Naive thymus-derived CD4-positive, alpha-beta T cell (primary cell): ENCODE measurements at regions of chr1 and their contacts with region 1.

Region 1: GRCh38 chr1:100895540-100896483 is at the start of gene SLC30A7:
- DNase-seq: peak; percentile 93 to 99 (median 94)
- ATAC-seq: peak; percentile 90
- H3K4me3 ChIP-seq: peak within 1 kb of the TSS; percentile 96
- H3K4me3 Mint-ChIP-seq: peak within 1 kb of the TSS; percentile 91 to 100 (median 99)
- H3K27ac ChIP-seq: peak within 1 kb of the TSS; percentile 95
- H3K27ac Mint-ChIP-seq: peak within 1 kb of the TSS; percentile 95 to 100 (median 99)
- H3K4me1 ChIP-seq: peaks cover 7 to 10% of the 10 kb centered on the region in 2 donors
- H3K4me1 Mint-ChIP-seq: peaks cover 17 to 58% (median 50%) of the 10 kb centered on the region in 7 donors
- H3K27me3 ChIP-seq: no peaks in the 10 kb centered on the region
- H3K27me3 Mint-ChIP-seq: no peaks in the 10 kb centered on the region
- total RNA-seq, gene SLC30A7: 29.9 to 44.5 (median 38.8) TPM

Region 2: GRCh38 chr1:99849744-99850458 is 1045.9 kb before region 1 on chr1 and contains the start of gene AGL:
- CTCF ChIA-PET with region 1: no interaction called
- POLR2A ChIA-PET with region 1: no interaction called
- intact Hi-C with region 1: loop called in 1 of 2 experiments (anchors 1 kb)
- DNase-seq: peak; percentile 76 to 88 (median 86)
- ATAC-seq: peak; percentile 97
- H3K4me3 ChIP-seq: peak within 1 kb of the TSS; percentile 81
- H3K4me3 Mint-ChIP-seq: peak within 1 kb of the TSS; percentile 89 to 99 (median 96)
- H3K27ac ChIP-seq: peak within 1 kb of the TSS; percentile 75
- H3K27ac Mint-ChIP-seq: peak within 1 kb of the TSS; percentile 86 to 98 (median 96)
- H3K4me1 ChIP-seq: peaks cover 7 to 10% of the 10 kb centered on the region in 2 donors
- H3K4me1 Mint-ChIP-seq: peaks cover 20 to 42% (median 37%) of the 10 kb centered on the region in 7 donors
- H3K27me3 ChIP-seq: no peaks in the 10 kb centered on the region
- H3K27me3 Mint-ChIP-seq: no peaks in the 10 kb centered on the region
- total RNA-seq, gene AGL: 11.5 to 20.1 (median 12.5) TPM

Region 3: DNA sequence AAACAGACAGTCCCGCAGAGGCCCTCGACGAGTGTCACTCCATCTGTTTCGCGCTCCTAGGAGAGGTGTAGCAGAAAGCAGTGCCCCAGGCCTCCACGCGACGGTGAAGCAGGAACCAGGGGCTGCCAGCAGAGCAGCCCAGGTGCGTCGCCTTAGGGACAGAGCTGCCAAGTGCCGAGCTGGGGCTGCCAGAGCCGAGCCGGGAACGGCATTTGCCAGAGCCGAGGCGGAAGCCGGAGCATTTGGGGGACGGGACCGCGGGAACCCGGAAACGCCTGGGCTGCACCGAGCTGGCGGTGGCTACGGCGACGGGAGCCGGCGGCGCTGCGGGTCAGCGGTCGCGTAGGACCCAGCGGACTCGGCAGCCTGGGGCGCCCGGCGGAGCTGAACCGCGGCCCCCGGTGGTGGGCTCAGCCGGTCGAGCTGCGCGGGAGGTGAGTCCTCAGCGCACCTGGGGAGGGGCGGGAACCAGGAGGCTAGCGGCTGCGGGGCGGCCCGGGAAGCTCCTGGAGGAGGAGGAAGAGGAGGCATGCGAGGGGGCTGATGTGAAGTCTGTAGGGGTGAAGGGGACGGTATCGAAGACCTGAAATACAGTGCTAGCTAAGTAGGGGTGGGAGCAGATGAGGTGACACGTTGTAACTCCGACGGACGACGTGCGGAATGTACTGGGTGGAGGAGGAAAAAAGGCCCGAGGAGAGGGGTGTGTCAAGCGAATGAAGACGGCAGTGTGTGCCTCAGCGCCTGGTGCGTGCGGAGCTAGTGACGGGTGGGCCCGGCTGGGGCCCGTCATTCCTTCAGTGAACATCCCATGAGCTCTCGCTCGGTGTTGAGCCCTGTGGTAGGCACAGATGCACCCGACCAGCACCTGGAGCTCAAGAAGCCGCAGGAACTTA is 925.8 kb before region 1 on chr1 and contains the start of gene SLC35A3:
- CTCF ChIA-PET with region 1: no interaction called
- POLR2A ChIA-PET with region 1: no interaction called
- intact Hi-C with region 1: loop called in 1 of 2 experiments (anchors 10 kb)
- DNase-seq: peak; percentile 69 to 85 (median 78)
- ATAC-seq: peak; percentile 89
- H3K4me3 ChIP-seq: peak within 1 kb of the TSS; percentile 75
- H3K4me3 Mint-ChIP-seq: peak within 1 kb of the TSS; percentile 96 to 100 (median 100)
- H3K27ac ChIP-seq: peak within 1 kb of the TSS; percentile 83
- H3K27ac Mint-ChIP-seq: peak within 1 kb of the TSS; percentile 91 to 99 (median 97)
- H3K4me1 ChIP-seq: peaks cover 6 to 20% of the 10 kb centered on the region in 2 donors
- H3K4me1 Mint-ChIP-seq: peaks cover 22 to 55% (median 40%) of the 10 kb centered on the region in 7 donors
- H3K27me3 ChIP-seq: no peaks in the 10 kb centered on the region
- H3K27me3 Mint-ChIP-seq: no peaks in the 10 kb centered on the region
- total RNA-seq, gene SLC35A3: 21.1 to 31.6 (median 27.3) TPM

Region 4: GRCh38 chr1:100883963-100884362 is 11.8 kb before region 1 on chr1:
- CTCF ChIA-PET with region 1: interaction called, 4 read pairs
- POLR2A ChIA-PET with region 1: interaction called, 10 read pairs
- intact Hi-C with region 1: no loop called
- DNase-seq: no peak
- ATAC-seq: no peak
- H3K4me3 ChIP-seq: no peak overlapping the region
- H3K4me3 Mint-ChIP-seq: no peak overlapping the region
- H3K27ac ChIP-seq: no peak overlapping the region
- H3K27ac Mint-ChIP-seq: no peak overlapping the region
- H3K4me1 ChIP-seq: no peaks in the 10 kb centered on the region
- H3K4me1 Mint-ChIP-seq: no peaks in the 10 kb centered on the region
- H3K27me3 ChIP-seq: no peaks in the 10 kb centered on the region
- H3K27me3 Mint-ChIP-seq: peaks cover 0 to 5% (median 0%) of the 10 kb centered on the region in 5 donors

Region 5: GRCh38 chr1:100912019-100912418 is 16.2 kb after region 1 on chr1:
- CTCF ChIA-PET with region 1: no interaction called
- POLR2A ChIA-PET with region 1: interaction called, 14 read pairs
- intact Hi-C with region 1: loop called in 1 of 2 experiments (anchors 2 kb)
- DNase-seq: no peak
- ATAC-seq: no peak
- H3K4me3 ChIP-seq: no peak overlapping the region
- H3K4me3 Mint-ChIP-seq: no peak overlapping the region
- H3K27ac ChIP-seq: no peak overlapping the region
- H3K27ac Mint-ChIP-seq: peak overlapping the region in 6 of 9 donors; percentile 5 to 79 (median 32)
- H3K4me1 ChIP-seq: no peaks in the 10 kb centered on the region
- H3K4me1 Mint-ChIP-seq: peaks cover 19 to 47% (median 44%) of the 10 kb centered on the region in 7 donors
- H3K27me3 ChIP-seq: no peaks in the 10 kb centered on the region
- H3K27me3 Mint-ChIP-seq: no peaks in the 10 kb centered on the region

Region 6: GRCh38 chr1:100969327-100969726 is 73.5 kb after region 1 on chr1:
- CTCF ChIA-PET with region 1: no interaction called
- POLR2A ChIA-PET with region 1: no interaction called
- intact Hi-C with region 1: no loop called
- DNase-seq: no peak
- ATAC-seq: no peak
- H3K4me3 ChIP-seq: no peak overlapping the region
- H3K4me3 Mint-ChIP-seq: peak overlapping the region in 1 of 10 donors; percentile 19
- H3K27ac ChIP-seq: no peak overlapping the region
- H3K27ac Mint-ChIP-seq: peak overlapping the region in 7 of 9 donors; percentile 25 to 70 (median 41)
- H3K4me1 ChIP-seq: peaks cover 0 to 19% of the 10 kb centered on the region in 2 donors
- H3K4me1 Mint-ChIP-seq: peaks cover 19 to 74% (median 59%) of the 10 kb centered on the region in 7 donors
- H3K27me3 ChIP-seq: no peaks in the 10 kb centered on the region
- H3K27me3 Mint-ChIP-seq: no peaks in the 10 kb centered on the region

Region 7: DNA sequence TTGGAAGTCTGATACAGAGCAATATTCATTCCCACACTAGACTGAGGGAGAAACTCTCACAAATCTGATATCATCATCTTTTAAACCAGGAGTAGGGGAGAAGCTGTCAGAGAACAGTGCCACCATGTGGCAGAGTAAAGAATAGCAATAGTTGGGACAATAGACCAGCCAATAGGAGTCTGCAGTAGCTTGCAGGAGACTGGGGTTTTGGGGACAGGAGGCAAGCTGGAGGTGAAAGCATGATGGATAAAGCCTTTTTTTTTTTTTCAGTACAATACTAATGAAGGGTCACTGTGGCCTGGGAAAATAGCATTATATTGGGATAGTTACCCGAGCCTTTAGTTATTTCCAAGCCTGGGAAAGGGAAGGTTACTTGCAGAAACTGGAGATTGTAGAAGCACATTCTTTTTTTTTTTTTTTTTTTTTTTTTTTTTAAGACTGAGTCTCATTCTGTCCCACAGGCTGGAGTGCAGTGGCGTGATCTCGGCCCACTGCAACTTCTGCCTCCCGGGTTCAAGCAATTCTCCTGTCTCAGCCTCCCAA is 461.7 kb after region 1 on chr1:
- CTCF ChIA-PET with region 1: no interaction called
- POLR2A ChIA-PET with region 1: no interaction called
- intact Hi-C with region 1: loop called (anchors 5 to 10 kb)
- DNase-seq: peak; percentile 26 to 90 (median 85)
- ATAC-seq: peak; percentile 100
- H3K4me3 ChIP-seq: no peak overlapping the region
- H3K4me3 Mint-ChIP-seq: peak overlapping the region in 3 of 10 donors; percentile 1 to 84 (median 60)
- H3K27ac ChIP-seq: no peak overlapping the region
- H3K27ac Mint-ChIP-seq: peak overlapping the region in 8 of 9 donors; percentile 42 to 97 (median 80)
- H3K4me1 ChIP-seq: peaks cover 6 to 7% of the 10 kb centered on the region in 2 donors
- H3K4me1 Mint-ChIP-seq: peaks cover 5 to 12% (median 9%) of the 10 kb centered on the region in 7 donors
- H3K27me3 ChIP-seq: no peaks in the 10 kb centered on the region
- H3K27me3 Mint-ChIP-seq: peaks cover 0 to 19% (median 0%) of the 10 kb centered on the region in 5 donors

Region 8: GRCh38 chr1:101484689-101485338 is 589.0 kb after region 1 on chr1:
- CTCF ChIA-PET with region 1: no interaction called
- POLR2A ChIA-PET with region 1: no interaction called
- intact Hi-C with region 1: no loop called
- DNase-seq: no peak
- ATAC-seq: no peak
- H3K4me3 ChIP-seq: no peak overlapping the region
- H3K4me3 Mint-ChIP-seq: no peak overlapping the region
- H3K27ac ChIP-seq: no peak overlapping the region
- H3K27ac Mint-ChIP-seq: no peak overlapping the region
- H3K4me1 ChIP-seq: no peaks in the 10 kb centered on the region
- H3K4me1 Mint-ChIP-seq: no peaks in the 10 kb centered on the region
- H3K27me3 ChIP-seq: no peaks in the 10 kb centered on the region
- H3K27me3 Mint-ChIP-seq: peaks cover 0 to 19% (median 0%) of the 10 kb centered on the region in 5 donors